ENCODE measurements at regions of chr19 and their contacts with region 1.

Region 1: DNA sequence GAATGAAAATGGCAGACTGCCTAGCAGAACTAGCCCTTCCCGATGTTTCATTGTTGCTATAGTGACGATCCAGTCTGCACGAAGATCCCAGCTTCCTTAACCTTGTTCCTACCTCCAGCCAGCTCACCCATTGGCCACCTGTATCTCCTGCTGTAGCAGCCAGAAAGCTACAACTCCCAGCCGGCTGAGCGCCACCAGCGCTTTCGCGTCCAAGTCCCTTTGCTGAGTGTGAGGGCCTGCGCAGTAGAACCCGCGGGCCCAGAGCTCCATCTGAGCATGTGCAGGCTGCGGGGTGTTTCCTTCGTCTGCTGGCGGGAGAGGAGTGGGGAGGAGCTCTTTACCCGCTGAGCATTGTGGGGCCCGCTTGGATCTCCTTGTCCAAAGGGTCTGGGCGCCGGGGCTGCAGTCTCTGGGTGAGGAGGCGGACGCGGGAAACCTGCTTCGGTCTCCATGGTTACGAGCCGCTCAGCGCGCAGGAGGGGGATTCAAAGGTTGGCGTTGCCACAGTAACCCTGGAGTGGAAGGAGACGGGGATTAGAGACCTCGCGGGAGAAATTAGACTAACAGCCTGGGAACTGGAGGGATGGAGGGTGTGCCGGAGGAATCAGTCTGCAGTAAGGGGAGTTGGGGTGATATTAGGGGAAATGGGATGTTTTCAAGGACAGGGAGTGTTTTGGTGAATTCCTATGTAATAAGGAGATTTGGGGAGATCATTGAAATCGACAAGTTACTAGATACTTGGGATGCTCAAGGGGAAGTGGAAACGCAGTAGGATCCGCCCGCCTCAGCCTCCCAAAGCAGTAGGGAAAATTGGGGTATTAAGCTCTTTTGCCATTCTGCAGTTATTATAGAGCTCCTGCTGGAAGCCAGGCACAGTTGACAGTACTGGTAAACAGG is 33.5 kb downstream of the ZSWIM9 start:
- DNase-seq: peak; percentile 79
- ATAC-seq: peak; percentile 100
- H3K4me3 Mint-ChIP-seq: no peak overlapping the region
- H3K27ac Mint-ChIP-seq: no peak overlapping the region
- H3K4me1 Mint-ChIP-seq: peaks cover 6% of the 10 kb centered on the region
- H3K27me3 Mint-ChIP-seq: no peaks in the 10 kb centered on the region
- CTCF ChIP-seq: no peak

Region 2: GRCh38 chr19:48190288-48190884 is 13.6 kb before region 1 on chr19:
- CTCF ChIA-PET with region 1: interaction called, 8 read pairs
- POLR2A ChIA-PET with region 1: interaction called, 18 read pairs
- intact Hi-C with region 1: no loop called
- DNase-seq: no peak
- ATAC-seq: peak; percentile 65
- H3K4me3 Mint-ChIP-seq: no peak overlapping the region
- H3K27ac Mint-ChIP-seq: no peak overlapping the region
- H3K4me1 Mint-ChIP-seq: peaks cover 25% of the 10 kb centered on the region
- H3K27me3 Mint-ChIP-seq: no peaks in the 10 kb centered on the region
- CTCF ChIP-seq: no peak

Region 3: DNA sequence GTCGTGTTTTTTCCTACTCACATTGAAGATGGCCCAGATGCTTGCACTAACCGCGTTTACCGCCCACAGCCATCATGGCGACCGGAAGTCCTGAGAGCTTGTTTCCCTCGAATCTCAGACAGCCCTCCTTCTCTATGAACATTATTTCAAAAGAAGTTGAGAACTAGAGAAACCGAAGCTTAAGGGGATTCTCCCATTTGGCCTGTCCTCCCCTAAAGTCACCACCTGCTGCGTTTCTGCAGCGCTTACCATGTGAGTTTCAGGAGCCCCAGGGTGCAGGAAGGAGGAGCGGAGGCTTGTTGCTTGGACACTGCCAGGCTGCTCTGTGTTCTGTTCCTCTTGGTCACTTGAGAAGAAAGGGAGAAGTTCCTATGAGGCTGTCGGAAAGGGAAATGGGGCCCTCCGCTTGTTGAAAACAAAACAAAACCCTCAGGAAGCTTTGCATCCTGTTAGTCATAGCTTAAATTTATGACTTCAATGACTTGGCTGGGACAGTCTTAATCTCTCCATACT is 45.6 kb after region 1 on chr19:
- CTCF ChIA-PET with region 1: no interaction called
- POLR2A ChIA-PET with region 1: interaction called, 28 read pairs
- intact Hi-C with region 1: no loop called
- DNase-seq: peak; percentile 41
- ATAC-seq: peak; percentile 87
- H3K4me3 Mint-ChIP-seq: peak overlapping the region; percentile 91
- H3K27ac Mint-ChIP-seq: peak overlapping the region; percentile 97
- H3K4me1 Mint-ChIP-seq: peaks cover 61% of the 10 kb centered on the region
- H3K27me3 Mint-ChIP-seq: no peaks in the 10 kb centered on the region
- CTCF ChIP-seq: no peak